PC-3 (cell line): ENCODE measurements at regions of chr10 and their contacts with region 1.

Region 1: DNA sequence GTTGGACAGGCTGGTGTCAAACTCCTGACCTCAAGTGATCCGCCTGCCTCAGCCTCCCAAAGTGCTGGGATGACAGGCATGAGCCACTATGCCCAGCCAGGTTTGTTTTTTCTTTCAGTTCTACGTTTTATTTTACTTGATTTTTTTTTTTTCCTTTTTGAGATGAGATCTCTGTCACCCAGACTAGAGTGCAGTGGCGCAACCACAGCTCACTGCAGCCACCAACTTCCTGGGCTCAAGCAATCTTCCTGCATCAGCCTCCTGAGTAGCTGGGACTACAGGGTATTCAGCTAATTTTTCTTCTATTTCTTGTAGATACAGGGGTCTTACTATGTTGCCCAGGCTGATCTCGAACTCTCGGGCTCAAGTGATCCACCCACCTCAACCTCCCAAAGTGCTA is 24.3 kb downstream of the GDI2 start:
- DNase-seq: no peak
- ATAC-seq: no peak
- H3K4me3 ChIP-seq: no peak overlapping the region
- H3K27ac ChIP-seq: no peak overlapping the region
- H3K4me1 ChIP-seq: peaks cover 11% of the 10 kb centered on the region
- H3K27me3 ChIP-seq: no peaks in the 10 kb centered on the region
- CTCF ChIP-seq: no peak

Region 2: GRCh38 chr10:5805711-5806110 is 16.7 kb after region 1 on chr10:
- CTCF ChIA-PET with region 1: no interaction called
- POLR2A ChIA-PET with region 1: interaction called, 17 read pairs
- intact Hi-C with region 1: no loop called
- DNase-seq: no peak
- ATAC-seq: no peak
- H3K4me3 ChIP-seq: no peak overlapping the region
- H3K27ac ChIP-seq: no peak overlapping the region
- H3K4me1 ChIP-seq: peaks cover 13% of the 10 kb centered on the region
- H3K27me3 ChIP-seq: no peaks in the 10 kb centered on the region
- CTCF ChIP-seq: no peak

Region 3: GRCh38 chr10:5813287-5814109 is 24.5 kb after region 1 on chr10 and contains the start of gene GDI2:
- CTCF ChIA-PET with region 1: interaction called, 11 read pairs
- POLR2A ChIA-PET with region 1: interaction called, 4 read pairs
- intact Hi-C with region 1: no loop called
- DNase-seq: peak; percentile 89
- ATAC-seq: peak; percentile 93
- H3K4me3 ChIP-seq: peak within 1 kb of the TSS; percentile 96
- H3K27ac ChIP-seq: peak within 1 kb of the TSS; percentile 82
- H3K4me1 ChIP-seq: peaks cover 26% of the 10 kb centered on the region
- H3K27me3 ChIP-seq: no peaks in the 10 kb centered on the region
- CTCF ChIP-seq: no peak
- total RNA-seq, gene GDI2: 94.7 and 122 TPM in 2 replicates

Region 4: GRCh38 chr10:5873515-5873995 is 84.6 kb after region 1 on chr10:
- CTCF ChIA-PET with region 1: no interaction called
- POLR2A ChIA-PET with region 1: no interaction called
- intact Hi-C with region 1: loop called (anchors 1 kb)
- DNase-seq: peak; percentile 59
- ATAC-seq: peak; percentile 66
- H3K4me3 ChIP-seq: no peak overlapping the region
- H3K27ac ChIP-seq: no peak overlapping the region
- H3K4me1 ChIP-seq: peaks cover 3% of the 10 kb centered on the region; the same call in 1 of the 2 replicates
- H3K27me3 ChIP-seq: no peaks in the 10 kb centered on the region
- CTCF ChIP-seq: peak; percentile 57

Region 5: GRCh38 chr10:5889624-5890451 is 100.9 kb after region 1 on chr10 and contains the starts of genes ANKRD16 and FBH1:
- CTCF ChIA-PET with region 1: no interaction called
- POLR2A ChIA-PET with region 1: interaction called, 14 read pairs
- intact Hi-C with region 1: no loop called
- DNase-seq: peak; percentile 93
- ATAC-seq: peak; percentile 86
- H3K4me3 ChIP-seq: peak within 1 kb of the TSS; percentile 77
- H3K27ac ChIP-seq: no peak within 1 kb of the TSS
- H3K4me1 ChIP-seq: peaks cover 4% of the 10 kb centered on the region
- H3K27me3 ChIP-seq: no peaks in the 10 kb centered on the region
- CTCF ChIP-seq: no peak
- total RNA-seq, gene ANKRD16: 4.9 and 7.2 TPM in 2 replicates
- total RNA-seq, gene FBH1: 22.0 and 33.2 TPM in 2 replicates

Region 6: DNA sequence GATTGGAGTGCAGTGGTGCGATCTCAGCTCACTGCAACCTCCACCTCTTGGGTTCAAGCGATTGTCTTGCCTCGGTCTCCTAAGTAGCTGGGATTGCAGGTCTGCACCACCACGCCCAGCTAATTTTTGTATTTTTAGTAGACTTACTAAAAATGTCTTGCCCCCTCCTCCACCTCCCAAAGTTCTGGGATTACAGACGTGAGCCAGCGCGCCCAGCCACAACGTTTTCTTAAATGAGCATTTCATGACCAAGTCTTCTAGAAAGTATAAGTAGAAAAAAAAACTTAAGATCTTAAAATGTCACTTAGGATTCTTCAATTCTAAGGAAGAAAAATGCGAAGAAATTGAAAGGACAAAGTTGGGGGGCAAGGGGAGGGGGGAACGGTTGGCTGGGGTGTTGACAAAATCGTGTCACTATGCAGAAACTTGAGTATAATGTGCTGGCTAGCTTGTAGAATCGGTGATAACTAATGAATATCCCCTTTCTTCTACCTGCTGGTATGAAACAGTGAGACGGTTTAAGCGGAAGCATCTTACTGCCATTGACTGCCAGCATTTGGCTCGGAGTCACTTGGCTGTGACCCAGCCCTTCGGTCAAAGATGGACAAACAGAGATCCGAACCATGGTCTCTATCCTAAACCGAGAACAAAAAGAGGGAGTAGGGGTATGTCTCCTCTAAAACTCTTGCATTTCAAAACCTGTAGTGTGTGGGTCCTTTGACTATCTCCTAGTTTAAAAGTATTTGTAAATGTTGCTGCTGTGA is 113.7 kb after region 1 on chr10:
- CTCF ChIA-PET with region 1: no interaction called
- POLR2A ChIA-PET with region 1: interaction called, 21 read pairs
- intact Hi-C with region 1: no loop called
- DNase-seq: no peak
- ATAC-seq: no peak
- H3K4me3 ChIP-seq: no peak overlapping the region
- H3K27ac ChIP-seq: no peak overlapping the region
- H3K4me1 ChIP-seq: no peaks in the 10 kb centered on the region
- H3K27me3 ChIP-seq: no peaks in the 10 kb centered on the region
- CTCF ChIP-seq: no peak